Right cardiac atrium (tissue), 5 donors: ENCODE measurements at regions of chr20 and their contacts with region 1.

Region 1: GRCh38 chr20:37880726-37881591 is 22.0 kb upstream of the VSTM2L start:
- DNase-seq: peak; percentile 82 to 94 (median 93)
- ATAC-seq: peak; percentile 90 to 93
- H3K4me3 ChIP-seq: no peak overlapping the region
- H3K27ac ChIP-seq: no peak overlapping the region
- H3K4me1 ChIP-seq: no peaks in the 10 kb centered on the region
- H3K27me3 ChIP-seq: no peaks in the 10 kb centered on the region

Region 2: DNA sequence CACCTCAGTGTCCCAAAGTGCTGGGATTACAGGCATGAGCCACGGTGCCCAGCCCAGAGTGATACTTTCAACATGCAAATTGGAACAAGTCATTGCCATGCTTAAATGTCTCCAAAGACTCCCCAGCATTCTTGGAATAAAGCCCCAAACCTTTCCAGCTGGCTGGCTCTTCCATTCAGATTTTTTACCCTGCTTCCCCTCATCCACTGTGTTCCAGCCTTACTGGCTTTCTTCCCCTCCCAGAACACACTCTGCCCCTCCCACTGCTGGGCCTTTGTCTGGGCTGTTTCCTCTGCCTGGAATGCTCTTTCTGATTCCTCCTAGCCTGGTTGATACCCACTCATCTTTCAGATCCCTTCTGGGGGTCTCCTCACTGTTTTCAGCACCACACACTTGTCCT is 400.0 kb before region 1 on chr20:
- intact Hi-C with region 1: no loop called
- DNase-seq: peak; percentile 58 to 74 (median 61)
- ATAC-seq: peak; percentile 78 to 80
- H3K4me3 ChIP-seq: no peak overlapping the region
- H3K27ac ChIP-seq: no peak overlapping the region
- H3K4me1 ChIP-seq: no peaks in the 10 kb centered on the region
- H3K27me3 ChIP-seq: no peaks in the 10 kb centered on the region

Region 3: DNA sequence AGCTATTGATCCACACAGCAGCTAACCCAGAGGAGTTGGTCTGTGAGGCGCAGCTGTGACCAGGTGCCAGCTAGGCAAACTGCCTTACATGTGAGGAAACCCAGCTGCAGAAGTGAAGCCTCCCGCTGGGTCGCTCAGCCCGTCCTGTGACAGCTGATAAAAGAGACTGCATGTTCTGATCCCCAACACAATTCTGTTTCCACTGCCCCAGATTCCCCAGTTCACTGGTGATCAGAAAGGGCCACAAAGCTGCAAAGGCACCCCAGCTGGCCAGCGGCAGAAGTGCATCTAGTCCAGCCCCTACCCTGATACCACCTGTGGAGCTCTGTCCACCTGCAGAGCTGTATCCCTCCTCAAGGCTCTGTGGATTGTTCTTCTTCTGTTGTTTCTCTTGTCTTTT is 122.6 kb before region 1 on chr20:
- intact Hi-C with region 1: loop called in 1 of 4 experiments (anchors 10 kb)
- DNase-seq: peak in 2 of 3 donors; percentile 33 to 62
- ATAC-seq: no peak
- H3K4me3 ChIP-seq: no peak overlapping the region
- H3K27ac ChIP-seq: no peak overlapping the region
- H3K4me1 ChIP-seq: peaks cover 5% of the 10 kb centered on the region
- H3K27me3 ChIP-seq: no peaks in the 10 kb centered on the region